ENCODE measurements at regions of chr4 and their contacts with region 1.

Region 1: DNA sequence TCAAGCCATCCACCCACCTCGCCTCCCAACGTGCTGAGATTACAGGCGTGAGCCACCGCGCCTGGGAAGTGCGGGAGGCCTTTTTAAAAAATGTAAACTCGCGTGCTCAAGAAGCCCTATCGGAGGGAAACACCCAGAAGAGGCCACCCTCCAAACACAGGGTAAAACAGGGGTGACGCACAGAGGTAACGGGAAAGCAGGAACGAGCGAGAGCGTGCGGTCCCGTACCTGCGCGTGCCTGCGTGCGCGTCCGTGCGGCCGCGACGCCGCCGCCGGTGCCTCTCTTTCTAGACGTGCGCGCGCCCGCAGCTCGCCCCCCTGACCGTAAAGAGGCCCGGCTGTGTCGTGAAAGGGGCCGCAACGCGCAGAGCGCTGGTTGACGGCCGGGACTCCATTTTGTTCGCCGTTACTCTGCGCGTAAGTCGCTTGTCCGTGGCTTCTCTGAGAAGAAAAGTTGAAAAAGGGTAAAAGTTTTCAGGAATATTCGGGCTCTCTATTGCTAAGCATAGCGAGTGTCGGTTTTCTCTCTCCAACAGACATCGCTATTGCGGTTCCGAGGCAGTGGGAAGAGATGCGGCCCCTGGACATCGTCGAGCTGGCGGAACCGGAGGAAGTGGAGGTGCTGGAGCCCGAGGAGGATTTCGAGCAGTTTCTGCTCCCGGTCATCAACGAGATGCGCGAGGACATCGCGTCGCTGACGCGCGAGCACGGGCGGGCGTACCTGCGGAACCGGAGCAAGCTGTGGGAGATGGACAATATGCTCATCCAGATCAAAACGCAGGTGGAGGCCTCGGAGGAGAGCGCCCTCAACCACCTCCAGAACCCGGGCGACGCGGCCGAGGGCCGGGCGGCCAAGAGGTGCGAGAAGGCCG is at the start of gene MRFAP1:
- DNase-seq: peak; percentile 91 to 97 (median 94)
- ATAC-seq: peak; percentile 84 to 89
- H3K4me3 Mint-ChIP-seq: peak within 1 kb of the TSS; percentile 97 to 100 (median 99)
- H3K27ac Mint-ChIP-seq: peak within 1 kb of the TSS; percentile 98 to 100 (median 99)
- H3K4me1 Mint-ChIP-seq: peaks cover 25 to 45% (median 41%) of the 10 kb centered on the region in 4 donors
- H3K27me3 Mint-ChIP-seq: no peaks in the 10 kb centered on the region
- polyA plus RNA-seq, gene MRFAP1: 141 to 186 (median 155) TPM

Region 2: DNA sequence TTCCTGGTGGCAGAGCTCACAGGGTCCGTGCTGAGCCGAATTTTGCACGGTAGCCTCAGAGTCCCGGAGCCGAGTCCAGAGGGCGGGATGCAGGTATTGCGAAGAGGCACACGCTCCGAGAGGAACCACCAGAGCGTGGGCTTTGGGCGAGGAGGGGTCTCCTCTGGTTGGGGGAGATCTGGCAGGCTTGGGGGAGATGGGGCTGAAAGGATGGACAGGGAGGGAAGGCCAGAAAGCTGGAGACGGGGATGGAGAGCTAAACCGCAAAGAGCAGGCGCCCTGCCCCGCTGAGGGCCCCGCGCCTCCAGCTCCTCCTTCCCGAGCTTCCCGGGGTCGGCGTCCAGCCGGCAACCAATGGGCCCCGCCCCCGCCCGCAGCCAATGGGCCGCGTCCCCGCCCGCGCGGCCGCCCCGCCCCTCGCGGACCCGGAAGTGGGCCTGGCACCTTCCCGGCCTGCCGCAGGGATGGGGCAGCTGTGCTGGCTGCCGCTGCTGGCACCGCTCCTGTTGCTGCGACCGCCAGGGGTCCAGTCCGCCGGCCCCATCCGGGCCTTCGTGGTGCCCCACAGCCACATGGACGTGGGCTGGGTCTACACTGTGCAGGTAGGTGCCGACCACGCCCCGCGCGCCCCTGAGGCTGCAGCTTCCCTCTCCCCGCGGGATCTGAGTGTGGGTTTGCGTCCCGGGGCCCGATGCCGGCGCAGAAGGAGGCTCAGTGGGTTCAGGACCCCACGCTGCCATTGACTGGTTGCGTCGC is 65.6 kb before region 1 on chr4 and contains the start of gene MAN2B2:
- POLR2A ChIA-PET with region 1: interaction called, 26 read pairs
- DNase-seq: peak; percentile 63 to 87 (median 78)
- ATAC-seq: peak; percentile 91 to 94
- H3K4me3 Mint-ChIP-seq: peak within 1 kb of the TSS; percentile 85 to 96 (median 90)
- H3K27ac Mint-ChIP-seq: peak within 1 kb of the TSS; percentile 65 to 94 (median 90)
- H3K4me1 Mint-ChIP-seq: peaks cover 11 to 20% (median 12%) of the 10 kb centered on the region in 4 donors
- H3K27me3 Mint-ChIP-seq: no peaks in the 10 kb centered on the region
- polyA plus RNA-seq, gene MAN2B2: 11.8 to 30.4 (median 14.4) TPM

Region 3: DNA sequence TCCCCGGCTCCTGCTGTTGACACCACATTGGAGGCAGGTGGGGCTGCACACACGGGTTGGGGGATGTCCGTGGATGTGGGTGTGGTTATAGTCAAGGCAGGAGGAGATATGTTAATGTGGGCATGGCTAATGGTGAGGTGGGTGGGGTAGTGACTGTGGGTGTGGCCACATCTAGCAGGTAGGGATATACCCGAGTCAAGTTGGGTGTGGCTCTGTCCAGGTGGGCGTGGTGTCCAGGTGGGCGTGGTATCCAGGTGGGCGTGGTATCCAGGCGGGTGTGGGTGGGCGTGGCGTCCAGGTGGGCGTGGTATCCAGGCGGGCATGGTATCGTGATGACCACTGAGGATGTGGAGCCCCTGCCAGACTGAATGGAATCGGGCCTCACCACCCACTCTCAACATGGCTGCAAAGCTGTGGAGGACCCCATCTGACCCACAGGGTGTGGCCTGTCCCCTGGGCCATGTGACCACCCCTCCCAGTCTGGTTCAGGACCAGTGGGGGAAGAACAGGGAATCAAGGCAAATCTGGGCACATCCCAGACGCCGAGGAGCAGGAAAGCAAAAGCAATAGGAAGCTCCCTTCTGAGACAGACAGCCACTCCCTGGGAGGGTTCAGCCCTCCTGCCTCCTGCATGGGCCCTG is 44.5 kb before region 1 on chr4:
- POLR2A ChIA-PET with region 1: no interaction called
- DNase-seq: no peak
- ATAC-seq: peak in 1 of 2 donors; percentile 27
- H3K4me3 Mint-ChIP-seq: no peak overlapping the region
- H3K27ac Mint-ChIP-seq: no peak overlapping the region
- H3K4me1 Mint-ChIP-seq: peaks cover 0 to 3% (median 1%) of the 10 kb centered on the region in 4 donors
- H3K27me3 Mint-ChIP-seq: no peaks in the 10 kb centered on the region

Region 4: GRCh38 chr4:6663596-6664393 is 23.3 kb after region 1 on chr4:
- POLR2A ChIA-PET with region 1: interaction called, 76 read pairs
- DNase-seq: no peak
- ATAC-seq: peak; percentile 36 to 43
- H3K4me3 Mint-ChIP-seq: peak overlapping the region in 8 of 10 donors; percentile 12 to 57 (median 50)
- H3K27ac Mint-ChIP-seq: peak overlapping the region in 1 of 10 donors; percentile 36
- H3K4me1 Mint-ChIP-seq: peaks cover 1 to 13% (median 9%) of the 10 kb centered on the region in 4 donors
- H3K27me3 Mint-ChIP-seq: peaks cover 0 to 35% (median 5%) of the 10 kb centered on the region in 5 donors

Region 5: GRCh38 chr4:6688879-6689505 is 48.5 kb after region 1 on chr4:
- POLR2A ChIA-PET with region 1: interaction called, 32 read pairs
- DNase-seq: peak; percentile 39 to 86 (median 60)
- ATAC-seq: peak; percentile 76 to 90
- H3K4me3 Mint-ChIP-seq: peak overlapping the region; percentile 73 to 95 (median 84)
- H3K27ac Mint-ChIP-seq: peak overlapping the region; percentile 88 to 99 (median 97)
- H3K4me1 Mint-ChIP-seq: peaks cover 39 to 78% (median 70%) of the 10 kb centered on the region in 4 donors
- H3K27me3 Mint-ChIP-seq: no peaks in the 10 kb centered on the region

Region 6: DNA sequence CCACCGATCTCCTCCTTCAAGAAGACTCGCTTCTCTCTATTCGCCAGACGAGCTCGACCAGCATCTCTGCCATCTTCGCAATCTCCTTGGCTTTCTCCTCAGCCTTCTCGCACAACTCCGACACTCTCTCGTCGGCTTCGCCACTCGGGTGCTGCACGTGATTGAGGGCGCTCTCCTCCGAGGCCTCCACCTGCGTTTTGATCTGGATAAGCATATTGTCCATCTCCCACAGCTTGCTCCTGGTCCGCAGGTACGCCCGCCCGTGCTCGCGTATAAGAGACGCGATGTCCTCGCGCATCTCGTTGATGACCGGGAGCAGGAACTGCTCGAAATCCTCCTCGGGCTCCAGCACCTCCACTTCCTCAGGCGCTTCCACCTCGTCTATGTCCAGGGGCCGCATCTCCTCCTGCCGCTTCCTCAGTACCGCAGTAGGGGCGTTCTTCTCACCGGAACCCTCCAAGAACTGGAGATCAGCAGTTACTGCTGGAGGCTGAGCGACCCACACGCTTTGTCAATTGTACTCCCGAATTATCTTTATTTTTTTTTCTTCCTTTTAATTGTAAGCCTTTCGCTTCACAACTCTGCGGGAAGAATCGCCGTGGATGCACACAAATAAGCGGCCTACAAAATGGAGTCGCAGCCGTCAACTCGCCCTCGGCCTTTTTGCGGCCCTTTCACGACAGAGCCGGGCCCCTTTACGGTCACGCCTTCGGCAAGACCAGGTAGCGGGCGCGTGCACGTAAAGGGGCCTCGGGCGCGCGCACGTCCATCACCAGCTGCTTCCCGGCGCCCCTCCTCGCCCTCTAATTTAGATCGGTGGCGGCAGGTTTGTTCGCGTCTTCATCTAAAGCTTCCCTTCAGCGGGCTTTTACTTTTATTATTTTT is 68.9 kb after region 1 on chr4 and contains the start of gene MRFAP1L1:
- POLR2A ChIA-PET with region 1: interaction called, 96 read pairs
- DNase-seq: peak; percentile 95 to 98 (median 97)
- ATAC-seq: peak; percentile 82 to 87
- H3K4me3 Mint-ChIP-seq: peak within 1 kb of the TSS; percentile 97 to 100 (median 99)
- H3K27ac Mint-ChIP-seq: peak within 1 kb of the TSS; percentile 95 to 100 (median 99)
- H3K4me1 Mint-ChIP-seq: peaks cover 37 to 71% (median 66%) of the 10 kb centered on the region in 4 donors
- H3K27me3 Mint-ChIP-seq: no peaks in the 10 kb centered on the region
- polyA plus RNA-seq, gene MRFAP1L1: 102 to 124 (median 105) TPM